ENCODE measurements at regions of chr3 and their contacts with region 1.

Region 1: GRCh38 chr3:111577794-111578685 is 17.1 kb downstream of the ZBED2 start:
- DNase-seq: no peak
- H3K4me3 Mint-ChIP-seq: no peak overlapping the region
- H3K27ac Mint-ChIP-seq: peak overlapping the region; percentile 2
- H3K4me1 Mint-ChIP-seq: peaks cover 63% of the 10 kb centered on the region
- H3K27me3 Mint-ChIP-seq: no peaks in the 10 kb centered on the region

Region 2: DNA sequence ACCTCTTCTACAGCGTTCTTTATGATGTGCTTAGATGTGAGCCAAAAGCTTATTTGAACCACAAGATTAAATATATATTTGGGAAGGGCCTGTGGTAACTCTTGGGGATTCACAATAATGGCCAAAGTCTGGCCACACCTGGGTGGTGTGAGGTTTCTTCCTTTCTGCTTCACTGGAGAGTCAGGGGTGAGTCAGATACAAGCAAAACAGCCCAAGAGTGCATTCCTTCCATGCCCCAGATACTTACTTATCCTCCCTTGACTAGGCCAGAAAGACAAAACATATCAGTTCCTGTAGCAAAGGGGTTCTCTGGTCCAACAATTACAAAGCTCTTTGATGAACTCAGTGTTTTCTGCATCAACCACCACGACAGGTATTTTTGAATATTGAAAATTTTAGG is 16.2 kb after region 1 on chr3:
- CTCF ChIA-PET with region 1: interaction called, 16 read pairs
- DNase-seq: no peak
- H3K4me3 Mint-ChIP-seq: peak overlapping the region; percentile 1
- H3K27ac Mint-ChIP-seq: peak overlapping the region; percentile 56
- H3K4me1 Mint-ChIP-seq: peaks cover 71% of the 10 kb centered on the region
- H3K27me3 Mint-ChIP-seq: no peaks in the 10 kb centered on the region

Region 3: GRCh38 chr3:111601810-111602209 is 23.8 kb after region 1 on chr3:
- CTCF ChIA-PET with region 1: interaction called, 10 read pairs
- DNase-seq: no peak
- H3K4me3 Mint-ChIP-seq: no peak overlapping the region
- H3K27ac Mint-ChIP-seq: no peak overlapping the region
- H3K4me1 Mint-ChIP-seq: peaks cover 55% of the 10 kb centered on the region
- H3K27me3 Mint-ChIP-seq: no peaks in the 10 kb centered on the region

Region 4: DNA sequence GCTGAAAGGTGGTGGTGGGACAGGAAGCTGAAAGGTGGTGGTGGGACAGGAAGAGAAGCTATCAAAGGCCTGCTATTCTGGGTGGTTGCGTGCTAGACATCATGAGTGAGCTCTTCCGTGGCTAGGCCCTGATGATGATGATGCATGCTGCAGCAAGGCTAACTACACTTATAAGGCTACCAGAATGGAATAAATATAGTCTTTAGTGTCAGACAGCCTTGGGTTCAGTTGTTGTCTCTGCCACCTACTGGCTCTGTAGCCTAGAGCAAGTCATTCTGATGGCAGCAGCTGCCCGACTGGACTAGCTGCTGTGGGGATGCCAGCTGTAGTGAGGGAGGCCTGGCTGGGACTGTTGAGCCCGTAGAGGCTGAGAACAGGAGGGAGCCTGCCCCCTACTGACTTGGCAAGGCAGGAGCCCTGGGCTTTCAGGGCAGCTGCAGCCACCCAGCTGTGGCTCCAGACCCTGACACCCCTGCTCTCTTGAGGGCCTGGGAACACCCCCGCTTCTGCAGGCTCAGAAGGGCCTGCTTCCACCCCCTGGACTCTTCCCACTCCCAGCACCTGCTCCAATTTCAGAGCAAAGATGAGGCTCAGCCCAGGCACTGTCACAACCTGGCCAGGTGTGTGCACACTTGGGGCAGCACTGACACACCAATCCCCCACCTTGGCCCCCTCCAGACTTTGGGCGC is 38.5 kb after region 1 on chr3:
- CTCF ChIA-PET with region 1: interaction called, 115 read pairs
- DNase-seq: peak; percentile 73
- H3K4me3 Mint-ChIP-seq: peak overlapping the region; percentile 23
- H3K27ac Mint-ChIP-seq: peak overlapping the region; percentile 89
- H3K4me1 Mint-ChIP-seq: peaks cover 70% of the 10 kb centered on the region
- H3K27me3 Mint-ChIP-seq: no peaks in the 10 kb centered on the region

Region 5: DNA sequence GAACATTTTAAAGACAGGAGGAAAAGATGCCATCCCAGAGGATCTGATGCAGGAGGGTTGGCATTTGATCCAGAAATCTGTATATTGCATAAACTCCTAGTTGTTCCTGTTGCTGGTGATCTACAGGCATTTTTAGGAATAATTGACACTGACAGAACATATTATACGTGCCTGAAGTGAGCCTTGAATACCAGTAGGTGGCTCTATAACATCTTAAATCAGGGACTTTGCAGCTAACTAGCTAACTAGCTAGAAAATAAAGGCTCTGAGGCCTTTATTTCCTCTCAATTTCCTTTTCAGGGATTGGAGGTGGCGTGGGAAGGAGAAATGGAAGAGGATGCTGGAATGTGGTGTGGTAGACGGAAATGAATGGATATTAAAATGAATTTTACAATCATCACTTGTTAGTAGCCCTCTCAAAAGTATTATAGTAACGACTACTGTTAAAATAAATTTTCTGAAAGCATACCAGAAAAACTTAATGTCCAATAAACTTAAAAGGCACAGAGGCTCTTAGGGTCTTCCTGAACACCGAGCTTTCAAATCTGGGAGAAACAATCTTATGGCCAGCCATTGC is 91.0 kb after region 1 on chr3:
- CTCF ChIA-PET with region 1: interaction called, 28 read pairs
- DNase-seq: no peak
- H3K4me3 Mint-ChIP-seq: no peak overlapping the region
- H3K27ac Mint-ChIP-seq: peak overlapping the region; percentile 83
- H3K4me1 Mint-ChIP-seq: peaks cover 85% of the 10 kb centered on the region
- H3K27me3 Mint-ChIP-seq: no peaks in the 10 kb centered on the region

Region 6: DNA sequence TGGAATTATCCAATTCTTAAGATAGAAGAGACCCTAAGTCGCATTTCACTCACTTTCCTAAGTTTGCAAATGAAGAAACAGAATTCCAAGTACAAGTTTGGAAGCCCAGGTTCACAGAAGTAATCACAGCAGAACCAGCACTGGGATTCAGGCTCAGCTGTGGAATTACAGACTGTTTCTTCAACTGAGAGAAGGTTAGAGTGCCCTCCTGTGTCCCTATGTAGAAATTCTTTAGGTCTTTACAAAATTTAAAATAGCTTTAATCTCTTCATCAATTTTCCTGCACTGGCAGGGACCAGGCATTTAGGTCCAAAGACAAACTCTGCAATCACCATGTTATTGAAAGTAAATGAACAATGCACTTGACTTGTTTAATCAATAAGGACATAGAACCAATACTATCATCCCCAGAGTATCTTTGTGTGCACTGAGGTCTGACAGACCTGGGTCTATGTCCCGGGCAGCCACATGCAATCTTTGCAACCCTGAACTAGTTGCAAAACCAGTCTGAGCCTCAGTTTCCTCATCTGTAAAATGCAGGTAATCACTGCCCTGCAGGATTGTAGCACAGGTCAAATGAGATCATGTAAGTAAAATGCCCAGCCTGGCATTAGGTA is 113.4 kb after region 1 on chr3:
- CTCF ChIA-PET with region 1: interaction called, 38 read pairs
- DNase-seq: no peak
- H3K4me3 Mint-ChIP-seq: no peak overlapping the region
- H3K27ac Mint-ChIP-seq: no peak overlapping the region
- H3K4me1 Mint-ChIP-seq: peaks cover 42% of the 10 kb centered on the region
- H3K27me3 Mint-ChIP-seq: no peaks in the 10 kb centered on the region

Measured in activated naive CD4-positive, alpha-beta T cell treated with anti-CD3 and anti-CD28 coated beads, Interleukin-2, amount 10 ng/mL, durations not matched to agents 7 days and 5 days (primary cell).